Lower leg skin (tissue), 4 donors: ENCODE measurements at regions of chr1 and their contacts with region 1.

Region 1: DNA sequence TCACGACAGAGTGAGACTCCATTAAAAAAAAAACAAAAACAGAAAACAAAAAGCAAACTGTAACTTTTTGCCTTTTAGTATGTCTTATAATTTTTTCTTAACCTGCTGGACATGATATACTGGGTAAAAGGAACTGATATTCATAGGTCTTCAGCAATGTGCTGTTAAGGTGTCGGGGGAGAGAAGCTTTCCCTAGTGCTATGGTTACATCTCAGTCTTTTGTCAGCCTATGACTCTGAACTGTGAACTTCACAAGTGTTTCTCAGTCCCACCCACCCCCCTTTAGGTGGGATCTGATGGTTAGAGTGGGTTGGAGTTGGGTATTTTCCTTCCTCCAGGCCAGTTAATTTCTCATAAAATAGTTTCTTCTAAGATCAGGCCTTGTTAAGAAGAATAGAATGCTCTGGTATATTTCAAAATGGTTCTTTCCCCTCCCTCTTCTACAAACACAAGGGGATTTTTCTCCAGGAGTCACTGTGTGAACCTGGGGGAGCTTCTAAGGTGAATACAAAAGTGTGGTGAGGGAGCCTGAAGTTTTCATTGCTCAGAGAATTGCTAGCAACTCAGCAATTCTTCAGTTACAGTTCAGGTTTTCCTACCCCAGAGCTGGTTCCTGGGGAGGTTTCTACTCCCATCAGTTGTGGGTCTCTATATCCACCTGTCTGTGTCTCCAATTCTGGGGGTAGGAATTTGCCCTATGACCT is 16.1 kb upstream of the EDARADD start:
- DNase-seq: no peak
- H3K4me3 ChIP-seq: no peak overlapping the region
- CTCF ChIP-seq: no peak
- POLR2A ChIP-seq: no peak

Region 2: DNA sequence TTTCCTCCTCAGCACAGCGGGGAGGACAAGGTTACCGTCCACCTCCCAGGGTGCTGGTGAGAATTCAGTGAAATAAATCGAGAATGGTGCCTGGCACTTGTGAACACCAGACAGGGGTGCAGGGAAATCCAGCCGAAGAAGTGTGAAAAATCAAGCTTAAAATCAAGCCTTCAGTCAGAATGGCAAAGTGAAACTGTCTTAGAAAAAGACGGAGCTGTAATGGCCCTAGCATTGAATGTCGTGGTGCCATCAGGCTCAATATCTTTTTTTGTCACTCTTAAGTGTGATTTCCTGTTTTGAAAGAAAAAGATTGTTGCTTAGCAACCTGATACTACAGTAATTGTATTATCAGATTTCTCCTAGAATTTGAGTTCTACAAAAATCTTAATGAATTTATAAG is 38.2 kb after region 1 on chr1:
- intact Hi-C with region 1: loop called (anchors 1 kb)
- DNase-seq: peak in 1 of 2 donors; percentile 25
- H3K4me3 ChIP-seq: no peak overlapping the region
- CTCF ChIP-seq: no peak
- POLR2A ChIP-seq: no peak

Region 3: DNA sequence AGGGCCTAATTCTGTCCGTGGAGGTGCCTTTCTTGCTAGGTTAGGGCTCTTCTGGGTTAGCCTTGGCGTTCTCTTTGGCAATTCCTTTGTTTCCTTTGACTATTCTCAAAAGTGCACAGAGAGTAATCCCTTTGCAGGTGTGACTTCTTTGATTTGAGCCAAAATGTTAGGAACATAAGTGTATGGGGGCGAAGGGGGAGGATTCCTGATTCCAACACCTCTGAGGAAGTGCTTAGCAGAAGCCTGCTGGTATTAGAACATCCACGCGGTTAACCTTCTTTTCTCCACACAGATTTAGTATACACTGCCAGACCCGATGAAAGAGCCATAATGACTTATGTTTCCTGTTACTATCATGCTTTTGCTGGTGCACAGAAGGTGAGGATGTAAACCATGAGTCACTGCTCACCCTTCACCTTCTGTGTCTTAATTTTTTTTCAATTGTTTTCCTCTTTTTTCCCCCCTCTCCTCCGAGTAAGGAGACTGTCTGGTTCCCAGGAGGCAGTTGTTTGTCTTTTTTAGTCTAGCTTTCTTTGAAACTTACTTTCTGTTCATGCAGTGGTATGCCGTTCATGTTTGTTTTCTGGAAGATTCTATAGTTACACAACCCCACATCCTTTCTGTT is 356.3 kb after region 1 on chr1:
- intact Hi-C with region 1: no loop called
- DNase-seq: no peak
- H3K4me3 ChIP-seq: no peak overlapping the region
- CTCF ChIP-seq: no peak
- POLR2A ChIP-seq: no peak